Astrocyte of the cerebellum (primary cell): ENCODE measurements at regions of chr18 and their contacts with region 1.

Region 1: GRCh38 chr18:12295901-12296386 is 12.1 kb upstream of the TUBB6 start:
- DNase-seq: no peak
- H3K4me3 ChIP-seq: no peak overlapping the region
- CTCF ChIP-seq: no peak

Region 2: DNA sequence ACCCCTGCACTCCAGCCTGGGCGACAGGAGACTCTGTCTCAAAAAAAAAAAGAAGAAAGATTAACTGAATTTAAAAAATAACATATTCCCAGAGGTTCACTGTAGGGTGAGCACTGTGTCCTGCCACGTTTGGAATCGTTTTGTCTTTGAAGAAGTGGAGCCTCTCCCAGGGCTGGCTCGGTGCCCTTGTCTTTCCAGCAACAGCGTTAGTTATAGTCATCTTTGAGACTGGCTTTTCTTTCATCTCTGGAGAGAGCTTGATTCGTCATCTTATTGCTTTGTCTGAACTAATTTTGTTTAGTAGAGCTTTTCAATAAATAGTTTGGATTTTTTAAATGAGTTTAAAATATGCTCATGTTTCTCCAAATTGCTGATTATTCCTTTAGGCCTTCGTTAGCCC is 264.1 kb before region 1 on chr18:
- in situ Hi-C with region 1: no loop called
- DNase-seq: peak; percentile 82
- H3K4me3 ChIP-seq: no peak overlapping the region
- CTCF ChIP-seq: no peak

Region 3: DNA sequence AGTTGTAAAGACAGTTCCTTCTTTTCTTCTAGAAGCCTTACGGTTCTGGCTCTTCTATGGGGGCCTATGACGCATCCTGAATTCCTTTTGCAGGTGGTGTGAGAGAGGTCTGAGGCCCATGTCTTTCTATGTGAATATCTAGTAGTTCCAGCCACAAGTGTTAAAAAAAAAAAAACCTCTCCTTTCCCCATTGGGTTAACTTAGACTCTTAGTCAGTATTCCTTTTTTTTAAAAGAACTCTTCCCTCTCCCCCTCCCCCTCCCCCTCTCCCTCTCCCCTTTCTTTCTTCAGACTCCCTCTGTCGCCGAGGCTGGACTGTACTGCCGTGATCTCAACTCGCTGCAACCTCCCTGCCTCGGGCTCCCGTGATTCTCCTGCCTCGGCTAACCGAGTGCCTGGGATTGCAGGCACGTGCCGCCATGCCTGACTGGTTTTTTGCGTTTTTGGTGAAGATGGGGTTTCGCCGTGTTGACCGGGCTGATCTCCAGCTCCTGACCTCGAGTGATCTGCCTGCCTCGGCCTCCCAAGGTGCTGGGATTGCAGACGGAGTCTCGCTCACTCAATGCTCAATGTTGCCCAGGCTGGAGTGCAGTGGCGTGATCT is 53.2 kb before region 1 on chr18:
- in situ Hi-C with region 1: loop called (anchors 5 kb)
- DNase-seq: no peak
- H3K4me3 ChIP-seq: no peak overlapping the region
- CTCF ChIP-seq: no peak

Region 4: DNA sequence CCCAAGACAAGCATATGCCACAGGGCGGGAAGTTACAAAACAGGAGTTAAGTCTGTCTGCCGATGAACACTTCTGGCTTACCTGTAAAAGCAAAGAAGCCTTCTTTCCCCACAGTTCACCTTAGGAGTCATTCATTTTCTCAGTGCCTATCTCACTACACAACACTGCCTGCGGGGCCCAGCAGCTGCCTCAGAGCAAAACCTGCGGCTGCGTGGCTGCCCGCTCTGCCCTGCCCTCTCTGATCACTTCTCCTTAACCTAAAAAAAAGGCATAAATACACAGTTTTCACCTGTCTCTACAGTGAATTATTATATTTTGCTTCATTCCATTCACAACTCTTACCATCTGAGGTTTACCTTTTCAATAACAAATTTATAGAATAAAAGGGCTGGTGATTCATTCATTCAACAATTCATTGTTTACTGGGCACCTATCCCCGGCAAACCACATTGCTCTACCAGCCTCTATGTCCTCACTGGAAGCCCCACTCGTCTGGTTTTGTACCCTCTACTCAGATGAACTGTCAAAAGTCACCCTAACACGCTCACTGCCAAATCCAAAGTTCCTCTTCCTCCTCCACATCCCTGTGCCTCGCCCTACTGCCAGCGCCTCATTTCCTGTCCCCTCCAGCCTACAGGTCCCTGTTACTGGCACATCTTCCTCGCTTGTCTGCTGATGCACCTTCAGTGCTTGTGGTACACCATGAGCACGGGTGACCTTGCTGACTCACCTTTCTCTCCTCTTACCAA is 49.7 kb after region 1 on chr18:
- in situ Hi-C with region 1: no loop called
- DNase-seq: no peak
- H3K4me3 ChIP-seq: no peak overlapping the region
- CTCF ChIP-seq: no peak